OCI-LY7 (cell line): ENCODE measurements at regions of chr6 and their contacts with region 1.

Region 1: DNA sequence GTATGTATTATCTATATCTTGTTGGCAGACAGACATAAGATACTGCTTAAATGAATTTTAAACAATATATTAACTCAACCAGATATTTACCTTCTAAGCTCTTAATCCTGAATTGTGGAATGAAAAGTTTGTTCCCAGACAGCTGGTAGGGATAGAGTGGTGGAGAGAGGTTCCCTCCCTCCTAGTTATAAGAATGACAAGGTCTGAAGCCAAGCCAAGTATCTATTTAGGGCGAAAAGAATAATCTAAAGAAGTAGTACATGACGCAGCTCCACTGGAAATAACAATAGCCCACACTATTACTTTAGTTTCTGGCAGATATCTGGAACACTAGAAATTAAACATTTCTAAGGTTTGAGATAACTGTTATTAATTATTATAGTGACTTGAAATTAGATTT is 104.3 kb downstream of the AHI1 start:
- DNase-seq: no peak
- H3K4me3 ChIP-seq: no peak overlapping the region
- H3K27ac ChIP-seq: no peak overlapping the region
- H3K4me1 ChIP-seq: peaks cover 6% of the 10 kb centered on the region
- CTCF ChIP-seq: no peak

Region 2: DNA sequence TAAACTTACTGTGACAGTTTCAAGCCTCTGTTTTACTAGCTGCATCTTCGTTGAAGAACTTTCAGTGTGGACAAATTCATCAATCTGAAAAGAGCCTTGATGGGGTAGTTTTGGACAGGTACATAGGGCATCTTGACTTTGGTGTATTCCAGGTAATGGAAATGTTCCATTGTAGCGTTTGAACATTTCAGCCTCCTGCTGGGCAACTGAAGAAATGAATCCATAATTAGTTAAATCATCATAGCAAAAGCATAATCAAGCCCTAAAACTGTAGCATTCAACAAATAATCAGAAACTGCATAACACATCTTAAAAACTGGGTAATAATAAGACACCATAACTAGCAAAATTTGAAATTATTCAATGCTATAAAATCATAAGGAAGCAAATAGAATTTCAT is 18.1 kb after region 1 on chr6:
- CTCF ChIA-PET with region 1: no interaction called
- POLR2A ChIA-PET with region 1: interaction called, 11 read pairs
- intact Hi-C with region 1: no loop called
- DNase-seq: peak; percentile 16
- H3K4me3 ChIP-seq: no peak overlapping the region
- H3K27ac ChIP-seq: no peak overlapping the region
- H3K4me1 ChIP-seq: no peaks in the 10 kb centered on the region
- CTCF ChIP-seq: peak; percentile 65